Right ventricle myocardium inferior (tissue), 1 donor: ENCODE measurements at regions of chr5 and their contacts with region 1.

Region 1: DNA sequence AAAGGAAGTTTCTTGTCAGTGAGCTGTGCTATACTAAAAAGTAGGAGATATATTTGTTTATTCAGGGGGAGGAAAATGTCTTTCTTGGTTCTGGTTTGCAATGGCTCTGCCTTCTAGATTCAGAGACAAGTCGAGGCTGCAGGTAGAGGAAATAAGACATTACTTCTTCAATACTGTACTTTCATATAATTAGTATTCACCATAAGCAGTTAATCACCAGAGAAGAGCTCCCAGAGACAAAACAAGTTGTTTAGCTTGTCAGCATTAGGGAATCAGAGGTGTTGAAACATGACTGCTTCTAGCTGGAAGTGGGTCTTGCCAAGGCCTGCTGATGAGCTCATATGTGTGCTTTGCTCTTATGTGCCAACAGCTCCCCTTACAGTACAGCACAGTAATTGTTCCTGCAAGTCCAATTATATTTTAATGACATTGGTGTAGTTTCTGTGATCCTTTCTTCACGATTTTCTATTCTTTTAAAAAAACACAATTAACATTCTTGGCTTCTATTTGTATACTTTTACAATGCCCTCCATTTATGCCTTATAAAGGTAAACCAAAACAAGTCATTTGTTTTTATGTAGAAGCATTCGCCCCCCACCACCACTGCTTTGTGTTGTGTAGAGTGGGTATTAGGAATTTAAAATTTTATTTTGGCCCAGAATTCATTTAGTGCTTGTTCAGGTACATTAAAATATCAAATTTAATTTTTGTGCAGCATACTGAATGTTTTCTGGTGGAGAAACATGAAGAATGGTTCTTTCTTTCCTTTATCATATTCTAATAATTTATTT is 112.2 kb downstream of the RPS23 start:
- DNase-seq: peak; percentile 70
- ATAC-seq: peak; percentile 100

Region 2: GRCh38 chr5:81425569-81425968 is 740.4 kb before region 1 on chr5:
- intact Hi-C with region 1: loop called (anchors 5 kb)
- DNase-seq: no peak
- ATAC-seq: no peak

Region 3: DNA sequence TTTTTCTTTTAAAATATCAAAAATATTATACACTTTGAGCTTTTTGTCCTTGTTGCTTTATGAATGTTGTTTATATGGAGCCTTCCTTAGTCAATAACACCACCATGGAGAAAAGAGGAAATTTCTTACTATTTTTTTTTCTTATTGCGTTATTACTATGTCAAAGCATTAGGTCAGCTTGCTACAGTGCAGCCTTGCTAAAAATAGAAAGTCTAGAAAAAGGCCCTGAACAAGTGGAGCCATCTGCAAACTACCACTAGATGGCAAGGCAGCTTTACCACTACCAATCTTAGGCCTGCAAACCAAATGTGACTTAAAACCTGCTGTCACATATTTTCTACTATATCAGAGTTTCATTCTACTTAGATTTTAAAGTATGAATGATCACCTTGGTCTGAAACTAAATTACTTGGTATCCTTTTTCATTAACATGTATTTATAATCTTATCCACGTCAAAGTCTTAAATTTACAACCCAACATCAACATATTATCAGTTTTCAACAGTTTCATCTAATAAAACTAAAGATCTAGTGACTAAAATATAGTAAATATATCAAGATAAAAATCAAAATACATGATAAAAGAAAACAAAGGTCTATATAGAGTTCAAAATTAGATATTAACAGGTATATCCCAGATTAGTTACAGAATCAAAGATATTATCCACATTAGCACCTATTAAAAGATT is 658.9 kb before region 1 on chr5:
- intact Hi-C with region 1: loop called (anchors 1 kb)
- DNase-seq: no peak
- ATAC-seq: peak; percentile 99

Region 4: DNA sequence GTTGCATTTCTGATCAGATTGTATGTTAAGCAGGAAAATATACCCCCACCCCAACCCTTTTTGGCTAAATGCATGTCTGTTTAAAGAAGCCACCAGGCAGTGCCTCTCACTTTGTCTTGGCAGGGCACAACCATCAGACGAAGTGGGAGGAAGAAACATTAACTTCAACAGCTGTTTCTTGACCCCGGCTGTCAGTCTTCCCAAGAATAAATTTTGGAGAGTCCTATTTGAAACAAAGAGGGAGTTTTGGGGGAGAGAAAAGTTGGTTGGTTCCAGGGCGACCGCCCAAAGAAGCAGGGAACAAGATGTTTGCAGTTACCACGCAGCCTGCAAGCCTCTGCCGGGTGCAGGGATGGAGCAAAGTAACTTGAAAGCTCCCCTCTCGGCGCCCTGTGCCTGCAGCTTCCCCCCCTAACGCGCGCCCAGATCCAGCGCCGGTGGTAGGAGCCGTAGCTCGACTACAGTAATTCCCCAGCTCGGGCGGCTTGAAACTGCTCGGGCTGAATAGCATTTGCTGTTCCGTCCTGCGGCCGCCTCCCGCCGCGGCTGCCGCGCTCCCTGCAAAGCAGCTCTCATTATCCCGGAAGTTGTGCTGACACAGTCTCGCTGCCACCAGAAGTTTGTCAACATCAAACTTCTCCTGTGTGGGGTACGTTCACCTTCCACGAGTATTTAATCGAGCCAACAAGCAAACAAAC is 314.3 kb before region 1 on chr5:
- intact Hi-C with region 1: loop called (anchors 10 kb)
- DNase-seq: peak; percentile 98
- ATAC-seq: peak; percentile 93

Region 5: DNA sequence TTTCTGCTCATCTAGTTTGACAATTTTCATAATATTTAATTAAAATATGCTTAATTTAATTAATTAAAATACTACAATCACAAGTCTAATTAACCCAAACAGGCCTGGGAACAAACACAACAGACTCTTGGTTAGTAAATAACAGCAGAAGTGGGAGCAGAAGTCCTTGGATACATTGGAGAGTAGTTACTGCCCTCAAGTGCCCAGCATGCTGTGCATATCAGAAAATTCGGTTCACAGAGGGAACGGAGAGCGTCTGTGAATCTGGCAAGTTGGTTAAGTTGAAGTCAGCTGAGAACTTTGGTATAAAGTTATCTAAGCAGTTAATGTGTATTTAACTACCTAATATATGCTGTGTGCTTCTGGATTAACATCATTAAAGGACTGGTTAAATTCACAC is 281.1 kb before region 1 on chr5:
- intact Hi-C with region 1: loop called (anchors 10 kb)
- DNase-seq: no peak
- ATAC-seq: peak; percentile 72

Region 6: DNA sequence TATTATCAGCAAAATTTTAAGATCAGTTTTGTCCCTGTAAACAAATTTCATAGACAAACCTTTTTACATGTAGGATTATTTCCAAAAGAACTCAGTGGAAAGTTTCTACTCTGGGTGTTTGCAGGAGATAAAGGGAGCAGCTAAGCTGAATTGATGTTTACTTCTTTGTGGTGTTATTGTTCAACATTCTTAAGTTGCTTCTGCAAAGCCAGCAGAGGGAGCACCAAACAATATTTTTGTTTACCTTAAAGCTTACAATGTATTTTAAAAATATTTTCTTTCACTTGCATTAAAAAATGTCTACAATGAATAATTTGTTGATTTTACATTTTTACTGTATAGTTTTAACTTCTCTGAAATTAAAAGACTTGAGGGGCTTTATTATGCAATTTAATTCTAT is 58.7 kb before region 1 on chr5:
- intact Hi-C with region 1: loop called (anchors 5 kb)
- DNase-seq: no peak
- ATAC-seq: no peak

Region 7: DNA sequence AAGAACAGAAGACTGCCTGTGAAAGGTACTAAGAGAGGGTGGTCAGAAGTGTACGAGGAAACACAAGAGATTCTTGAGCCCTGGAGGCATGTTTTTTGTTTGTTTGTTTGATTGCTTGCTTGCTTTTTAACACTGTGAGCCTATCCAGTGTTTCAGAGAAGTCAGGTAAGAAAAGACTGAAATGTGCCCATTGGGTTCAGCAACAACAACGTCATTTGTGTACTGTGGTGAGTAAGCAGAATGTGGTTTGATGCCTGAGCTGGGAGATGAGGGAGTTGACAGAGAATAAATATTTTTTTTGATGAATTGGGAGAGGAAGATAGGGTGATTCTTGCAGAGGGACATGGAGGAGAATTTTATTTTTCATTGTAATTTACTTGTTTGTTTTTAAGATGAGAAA is 39.1 kb after region 1 on chr5:
- intact Hi-C with region 1: no loop called
- DNase-seq: no peak
- ATAC-seq: no peak